Aorta (tissue), 5 donors: ENCODE measurements at regions of chr5 and their contacts with region 1.

Region 1: GRCh38 chr5:54517174-54518092 is at the start of gene SNX18:
- DNase-seq: peak; percentile 96
- ATAC-seq: peak; percentile 95
- H3K4me3 ChIP-seq: peak within 1 kb of the TSS; percentile 78 to 88
- H3K27ac ChIP-seq: peak within 1 kb of the TSS; percentile 79 to 95
- H3K4me1 ChIP-seq: no peaks in the 10 kb centered on the region
- H3K27me3 ChIP-seq: no peaks in the 10 kb centered on the region
- total RNA-seq, gene SNX18: 84.4 to 110 TPM

Region 2: GRCh38 chr5:54580997-54581811 is 63.8 kb after region 1 on chr5:
- intact Hi-C with region 1: loop called in 1 of 2 experiments (anchors 5 kb)
- DNase-seq: peak in 1 of 2 donors; percentile 58
- ATAC-seq: peak; percentile 39
- H3K4me3 ChIP-seq: no peak overlapping the region
- H3K27ac ChIP-seq: peak overlapping the region in 1 of 2 donors; percentile 91
- H3K4me1 ChIP-seq: peaks cover 5 to 7% of the 10 kb centered on the region in 2 donors
- H3K27me3 ChIP-seq: no peaks in the 10 kb centered on the region

Region 3: DNA sequence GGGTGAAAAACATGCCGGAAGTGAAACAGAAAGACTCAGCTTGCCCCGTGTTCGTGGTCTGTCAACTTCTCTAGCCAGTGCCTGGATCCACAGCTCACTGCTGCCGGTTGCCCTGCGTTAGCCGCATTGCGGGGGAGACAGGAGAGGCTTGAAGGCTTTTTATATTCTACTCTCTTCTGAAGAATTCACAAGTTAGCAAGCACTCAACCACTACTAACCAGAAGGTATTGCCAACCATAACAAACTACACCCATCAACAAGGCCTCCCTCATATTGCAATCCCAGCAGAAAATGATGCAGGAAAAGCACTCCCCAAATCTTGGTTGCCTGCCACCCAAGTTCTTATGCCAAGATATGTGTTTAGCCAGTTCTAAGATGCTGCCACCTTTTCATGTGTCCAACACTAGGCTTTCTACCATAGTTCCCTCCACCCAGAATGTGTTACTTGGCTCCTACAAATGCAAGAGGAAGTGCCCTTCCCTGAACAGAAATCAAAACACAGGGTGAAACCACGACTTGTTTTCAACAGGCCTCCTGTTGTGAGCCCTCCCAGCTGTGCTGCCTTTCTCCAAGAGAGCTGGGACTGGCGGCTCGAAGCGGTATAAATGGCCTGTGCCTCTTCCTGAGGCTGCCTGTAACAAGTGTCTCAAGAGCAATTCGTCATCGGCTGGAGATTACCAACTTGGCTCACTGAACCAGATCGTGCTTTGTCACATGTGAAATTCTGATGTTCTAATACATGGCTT is 129.1 kb after region 1 on chr5:
- intact Hi-C with region 1: loop called in 1 of 2 experiments (anchors 1 kb)
- DNase-seq: peak; percentile 84 to 93
- ATAC-seq: peak; percentile 85
- H3K4me3 ChIP-seq: peak overlapping the region in 1 of 2 donors; percentile 65
- H3K27ac ChIP-seq: peak overlapping the region; percentile 96 to 99
- H3K4me1 ChIP-seq: peaks cover 3 to 21% of the 10 kb centered on the region in 2 donors
- H3K27me3 ChIP-seq: no peaks in the 10 kb centered on the region

Region 4: GRCh38 chr5:54753034-54753433 is 235.6 kb after region 1 on chr5:
- intact Hi-C with region 1: no loop called
- DNase-seq: peak in 1 of 2 donors; percentile 69
- ATAC-seq: no peak
- H3K4me3 ChIP-seq: no peak overlapping the region
- H3K27ac ChIP-seq: no peak overlapping the region
- H3K4me1 ChIP-seq: peaks cover 0 to 5% of the 10 kb centered on the region in 2 donors
- H3K27me3 ChIP-seq: no peaks in the 10 kb centered on the region

Region 5: GRCh38 chr5:54844905-54845566 is 327.6 kb after region 1 on chr5:
- intact Hi-C with region 1: loop called (anchors 1 to 5 kb)
- DNase-seq: no peak
- ATAC-seq: peak; percentile 74
- H3K4me3 ChIP-seq: no peak overlapping the region
- H3K27ac ChIP-seq: peak overlapping the region in 1 of 2 donors; percentile 79
- H3K4me1 ChIP-seq: peaks cover 0 to 3% of the 10 kb centered on the region in 2 donors
- H3K27me3 ChIP-seq: no peaks in the 10 kb centered on the region

Region 6: DNA sequence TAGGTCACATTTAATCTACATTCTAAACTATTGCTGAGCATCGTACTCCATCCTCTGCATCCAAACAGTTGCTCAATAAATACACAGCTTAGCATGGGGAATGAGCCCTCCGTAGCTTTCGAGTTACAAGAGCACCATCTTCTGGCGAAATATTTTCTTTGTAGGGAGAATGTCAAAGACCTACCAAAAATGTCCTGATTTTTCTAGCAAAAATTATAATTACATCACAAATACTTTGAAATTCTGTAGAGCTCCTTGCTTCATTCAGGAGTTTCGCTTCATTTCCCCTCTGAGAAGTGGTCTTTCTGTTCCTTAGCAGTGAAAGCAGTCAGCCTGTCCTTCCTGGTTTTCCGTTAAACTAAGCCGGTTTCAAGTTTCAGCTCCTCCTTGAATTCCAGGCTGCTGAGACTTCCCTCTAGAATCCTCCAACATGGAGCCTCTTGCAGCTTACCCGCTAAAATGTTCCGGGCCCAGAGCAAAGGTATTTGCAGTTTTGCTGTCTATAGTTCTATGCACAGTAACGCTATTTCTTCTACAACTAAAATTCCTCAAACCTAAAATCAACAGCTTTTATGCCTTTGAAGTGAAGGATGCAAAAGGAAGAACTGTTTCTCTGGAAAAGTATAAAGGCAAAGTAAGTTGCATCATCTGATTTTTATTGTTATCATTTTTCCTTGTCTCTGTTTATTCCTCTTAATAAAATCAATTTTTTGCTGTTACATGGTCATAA is 642.5 kb after region 1 on chr5 and contains the start of gene GPX8:
- intact Hi-C with region 1: loop called in 1 of 2 experiments (anchors 5 kb)
- DNase-seq: no peak
- ATAC-seq: peak; percentile 88
- H3K4me3 ChIP-seq: peak within 1 kb of the TSS; percentile 92 to 97
- H3K27ac ChIP-seq: peak within 1 kb of the TSS in 1 of 2 donors; percentile 40
- H3K4me1 ChIP-seq: no peaks in the 10 kb centered on the region
- H3K27me3 ChIP-seq: no peaks in the 10 kb centered on the region
- total RNA-seq, gene GPX8: 29.8 to 49.8 TPM